GM13977 (cell line): ENCODE measurements at regions of chr5 and their contacts with region 1.

Region 1: DNA sequence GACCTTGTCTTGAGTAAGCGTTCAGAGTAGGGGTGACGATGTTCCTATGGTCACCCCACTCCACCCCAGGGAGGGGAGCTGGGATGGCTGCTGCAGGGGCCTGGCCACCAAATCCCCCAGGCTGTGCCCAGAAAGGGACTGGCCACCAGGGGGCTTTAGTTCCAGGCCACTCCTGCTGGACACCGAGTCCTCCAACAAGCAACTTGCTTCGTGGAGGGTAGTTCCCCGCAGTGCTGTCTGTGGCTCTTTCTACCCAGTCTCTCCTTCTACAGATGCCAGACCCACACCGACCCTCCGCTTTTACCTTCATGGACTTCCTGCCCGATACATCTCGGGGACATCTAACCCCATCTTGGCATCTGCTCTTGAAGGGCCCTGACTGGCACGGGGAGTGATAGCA is 35.7 kb upstream of the GABRP start:
- DNase-seq: peak; percentile 15
- CTCF ChIP-seq: peak; percentile 9

Region 2: DNA sequence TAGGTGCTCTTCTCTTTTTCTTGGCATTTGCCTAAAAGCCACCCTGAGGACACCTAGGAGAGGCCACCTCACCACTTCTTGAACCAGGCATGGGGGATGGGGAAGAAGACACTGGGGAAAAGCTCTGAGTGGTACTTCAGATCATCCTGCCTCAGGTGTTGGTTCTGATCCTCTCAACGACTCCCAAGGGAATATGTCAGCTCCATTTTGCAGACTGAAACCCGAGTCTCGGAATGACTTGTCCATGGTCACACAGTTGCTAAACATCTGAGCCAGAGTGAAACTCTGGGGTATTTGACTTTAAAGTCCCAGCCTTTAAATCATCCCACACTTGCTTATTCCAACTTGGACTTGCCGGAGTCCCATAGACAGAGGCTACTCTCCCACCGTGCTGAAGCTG is 84.9 kb before region 1 on chr5:
- in situ Hi-C with region 1: no loop called
- DNase-seq: no peak
- CTCF ChIP-seq: no peak

Region 3: GRCh38 chr5:171342362-171343111 is 594.7 kb after region 1 on chr5:
- in situ Hi-C with region 1: loop called (anchors 25 kb)
- DNase-seq: peak; percentile 41
- CTCF ChIP-seq: peak; percentile 69